Ascending aorta (tissue), 2 donors: ENCODE measurements at regions of chr1 and their contacts with region 1.

Region 1: GRCh38 chr1:41504114-41505035 is 19.9 kb upstream of the EDN2 start:
- DNase-seq: no peak
- H3K4me3 ChIP-seq: no peak overlapping the region
- H3K27ac ChIP-seq: no peak overlapping the region
- H3K4me1 ChIP-seq: peaks cover 6 to 22% of the 10 kb centered on the region in 2 donors
- H3K27me3 ChIP-seq: no peaks in the 10 kb centered on the region
- CTCF ChIP-seq: no peak

Region 2: GRCh38 chr1:41381692-41382477 is 122.5 kb before region 1 on chr1:
- intact Hi-C with region 1: loop called (anchors 5 kb)
- DNase-seq: peak in 1 of 2 donors; percentile 81
- H3K4me3 ChIP-seq: peak overlapping the region; percentile 65 to 71
- H3K27ac ChIP-seq: peak overlapping the region; percentile 98
- H3K4me1 ChIP-seq: peaks cover 12 to 16% of the 10 kb centered on the region in 2 donors
- H3K27me3 ChIP-seq: no peaks in the 10 kb centered on the region
- CTCF ChIP-seq: no peak

Region 3: DNA sequence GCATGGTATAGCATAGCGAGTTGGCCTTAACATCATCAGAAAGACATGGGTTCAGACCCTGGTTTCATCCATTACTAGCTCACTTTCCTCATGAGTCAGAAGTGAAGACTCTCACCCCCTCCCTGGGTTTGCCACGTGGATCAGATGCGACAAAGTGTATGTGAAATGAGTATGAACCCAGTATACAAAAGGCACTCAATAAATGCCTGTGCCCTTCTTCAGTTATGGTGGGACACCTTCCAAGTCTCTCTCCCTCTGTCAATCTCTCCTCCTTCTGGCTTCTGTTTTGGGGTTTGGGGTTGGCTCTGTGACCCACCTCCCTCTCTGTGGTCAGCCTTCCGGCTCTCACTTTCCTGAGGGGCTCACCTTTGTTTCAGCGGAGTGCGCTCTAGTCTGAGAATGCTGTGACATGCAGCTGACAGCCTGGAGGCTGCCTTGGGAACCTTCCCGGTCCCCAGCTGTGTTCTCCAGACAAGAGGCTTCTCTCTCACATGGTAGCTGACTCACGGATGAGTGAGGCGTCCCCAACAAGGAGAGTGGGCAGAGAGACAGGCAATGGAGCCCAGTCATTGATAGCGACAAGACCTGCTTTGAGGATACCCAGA is 135.1 kb after region 1 on chr1:
- intact Hi-C with region 1: no loop called
- DNase-seq: peak in 1 of 2 donors; percentile 59
- H3K4me3 ChIP-seq: no peak overlapping the region
- H3K27ac ChIP-seq: no peak overlapping the region
- H3K4me1 ChIP-seq: no peaks in the 10 kb centered on the region
- H3K27me3 ChIP-seq: no peaks in the 10 kb centered on the region
- CTCF ChIP-seq: no peak